Endothelial cell of umbilical vein (primary cell): ENCODE measurements at regions of chr2 and their contacts with region 1.

Region 1: GRCh38 chr2:222860740-222861410 is at the start of gene ACSL3:
- DNase-seq: peak; percentile 96
- H3K4me3 ChIP-seq: peak within 1 kb of the TSS; percentile 72 to 94 (median 92)
- H3K27ac ChIP-seq: peak within 1 kb of the TSS; percentile 89
- H3K4me1 ChIP-seq: peaks cover 38% of the 10 kb centered on the region
- H3K27me3 ChIP-seq: no peaks in the 10 kb centered on the region
- CTCF ChIP-seq: peak in 1 of 2 donors; percentile 1
- POLR2A ChIP-seq: peak; percentile 99
- total RNA-seq, gene ACSL3: 139 and 142 TPM in 2 replicates

Region 2: GRCh38 chr2:222433332-222434173 is 427.3 kb before region 1 on chr2:
- CTCF ChIA-PET with region 1: no interaction called
- POLR2A ChIA-PET with region 1: no interaction called
- dilution Hi-C with region 1: no loop called
- intact Hi-C with region 1: no loop called
- DNase-seq: no peak
- H3K4me3 ChIP-seq: no peak overlapping the region
- H3K27ac ChIP-seq: no peak overlapping the region
- H3K4me1 ChIP-seq: no peaks in the 10 kb centered on the region
- H3K27me3 ChIP-seq: no peaks in the 10 kb centered on the region
- CTCF ChIP-seq: no peak
- POLR2A ChIP-seq: no peak

Region 3: DNA sequence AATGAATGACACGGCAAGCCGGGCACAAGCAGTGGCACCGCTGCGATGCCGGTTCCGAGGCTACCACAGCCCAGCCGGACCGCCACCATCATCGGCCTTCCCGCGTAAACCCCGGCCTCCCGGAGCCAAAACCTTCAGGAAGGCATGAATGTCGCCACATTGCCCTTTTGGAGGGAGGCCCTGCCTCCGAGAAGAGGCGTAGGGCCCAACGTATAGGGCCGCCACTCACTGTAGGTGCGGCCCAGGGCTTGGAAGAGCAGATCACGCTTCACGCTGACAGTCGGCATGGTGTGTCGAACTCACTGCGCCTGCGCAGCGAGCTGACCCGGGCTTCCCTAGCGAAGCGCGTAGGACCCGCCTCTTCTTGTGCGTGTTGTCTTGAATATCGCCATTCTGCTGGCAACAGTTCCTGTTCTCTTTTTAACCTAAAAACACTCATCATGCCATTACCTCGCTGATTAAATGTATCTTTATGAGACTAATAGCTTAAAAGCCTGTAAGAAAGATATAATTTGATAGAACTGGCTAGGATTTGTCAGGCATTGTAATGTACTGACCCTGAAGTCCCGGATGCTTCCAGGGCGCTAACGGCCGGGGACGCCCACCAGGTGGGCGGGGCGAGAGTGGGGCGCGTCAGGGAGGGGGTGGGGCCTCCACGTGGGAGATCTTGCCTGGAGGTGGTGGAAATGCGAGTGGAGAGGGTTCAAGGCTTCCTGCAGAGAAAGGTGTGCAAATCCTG is 204.9 kb before region 1 on chr2 and contains the start of gene FARSB:
- CTCF ChIA-PET with region 1: no interaction called
- POLR2A ChIA-PET with region 1: no interaction called
- dilution Hi-C with region 1: no loop called
- intact Hi-C with region 1: loop called (anchors 1 kb)
- DNase-seq: peak; percentile 97
- H3K4me3 ChIP-seq: peak within 1 kb of the TSS; percentile 47 to 95 (median 92)
- H3K27ac ChIP-seq: peak within 1 kb of the TSS; percentile 99
- H3K4me1 ChIP-seq: peaks cover 34% of the 10 kb centered on the region
- H3K27me3 ChIP-seq: no peaks in the 10 kb centered on the region
- CTCF ChIP-seq: no peak
- POLR2A ChIP-seq: peak; percentile 64
- total RNA-seq, gene FARSB: 27.2 and 29.4 TPM in 2 replicates

Region 4: DNA sequence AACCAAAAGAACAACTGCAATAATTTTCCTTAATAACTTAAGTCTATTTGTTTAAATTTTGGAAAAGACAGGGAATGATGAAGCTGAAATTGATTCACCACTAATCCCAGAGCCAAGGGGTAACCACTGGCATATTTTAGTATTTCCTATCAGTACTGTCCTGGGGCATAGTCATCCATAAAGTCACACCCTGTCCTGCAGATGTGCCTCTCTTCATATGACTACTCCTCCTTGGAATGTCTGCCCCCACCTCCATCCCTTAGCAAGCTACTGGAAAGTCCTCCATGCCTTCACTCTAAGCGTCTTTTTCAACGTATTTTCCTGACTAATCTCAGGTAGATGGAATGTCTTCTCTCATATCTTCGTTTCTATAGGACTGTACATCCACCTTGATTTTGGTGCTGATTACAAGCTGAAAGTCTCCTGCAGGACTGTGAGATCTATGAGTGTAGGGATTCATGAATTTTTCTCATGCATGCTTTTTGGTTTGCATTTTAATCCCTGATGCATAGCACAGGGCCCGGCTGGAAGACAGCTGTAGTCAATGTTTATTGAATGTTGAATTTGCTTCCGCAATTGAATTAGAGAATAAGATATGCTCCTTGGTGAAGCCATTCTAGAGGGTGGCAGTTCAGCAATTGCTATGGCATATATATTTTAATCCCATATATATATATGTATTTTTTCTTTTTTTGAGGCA is 103.8 kb before region 1 on chr2:
- CTCF ChIA-PET with region 1: no interaction called
- POLR2A ChIA-PET with region 1: no interaction called
- dilution Hi-C with region 1: no loop called
- intact Hi-C with region 1: no loop called
- DNase-seq: no peak
- H3K4me3 ChIP-seq: no peak overlapping the region
- H3K27ac ChIP-seq: no peak overlapping the region
- H3K4me1 ChIP-seq: peaks cover 10% of the 10 kb centered on the region
- H3K27me3 ChIP-seq: peaks cover 0 to under 1% of the 10 kb centered on the region in 2 experiments
- CTCF ChIP-seq: no peak
- POLR2A ChIP-seq: no peak

Region 5: GRCh38 chr2:222797261-222797660 is 63.6 kb before region 1 on chr2:
- CTCF ChIA-PET with region 1: interaction called, 20 read pairs
- POLR2A ChIA-PET with region 1: interaction called, 10 read pairs
- dilution Hi-C with region 1: no loop called
- intact Hi-C with region 1: loop called (anchors 2 kb)
- DNase-seq: peak; percentile 48
- H3K4me3 ChIP-seq: no peak overlapping the region
- H3K27ac ChIP-seq: no peak overlapping the region
- H3K4me1 ChIP-seq: peaks cover 2% of the 10 kb centered on the region
- H3K27me3 ChIP-seq: peaks cover 0 to 2% of the 10 kb centered on the region in 2 experiments
- CTCF ChIP-seq: peak; percentile 30 to 43
- POLR2A ChIP-seq: no peak

Region 6: GRCh38 chr2:222844323-222844722 is 16.6 kb before region 1 on chr2:
- CTCF ChIA-PET with region 1: interaction called, 30 read pairs
- POLR2A ChIA-PET with region 1: interaction called, 6 read pairs
- dilution Hi-C with region 1: no loop called
- intact Hi-C with region 1: loop called (anchors 1 kb)
- DNase-seq: peak; percentile 55
- H3K4me3 ChIP-seq: no peak overlapping the region
- H3K27ac ChIP-seq: no peak overlapping the region
- H3K4me1 ChIP-seq: peaks cover 22% of the 10 kb centered on the region
- H3K27me3 ChIP-seq: no peaks in the 10 kb centered on the region
- CTCF ChIP-seq: no peak
- POLR2A ChIP-seq: no peak

Region 7: GRCh38 chr2:222892321-222892720 is 31.4 kb after region 1 on chr2:
- CTCF ChIA-PET with region 1: interaction called, 9 read pairs
- POLR2A ChIA-PET with region 1: interaction called, 4 read pairs
- dilution Hi-C with region 1: no loop called
- intact Hi-C with region 1: loop called (anchors 1 kb)
- DNase-seq: peak; percentile 88
- H3K4me3 ChIP-seq: peak overlapping the region in 1 of 3 experiments; percentile 50
- H3K27ac ChIP-seq: peak overlapping the region; percentile 46
- H3K4me1 ChIP-seq: peaks cover 39% of the 10 kb centered on the region
- H3K27me3 ChIP-seq: no peaks in the 10 kb centered on the region
- CTCF ChIP-seq: no peak
- POLR2A ChIP-seq: no peak

Region 8: DNA sequence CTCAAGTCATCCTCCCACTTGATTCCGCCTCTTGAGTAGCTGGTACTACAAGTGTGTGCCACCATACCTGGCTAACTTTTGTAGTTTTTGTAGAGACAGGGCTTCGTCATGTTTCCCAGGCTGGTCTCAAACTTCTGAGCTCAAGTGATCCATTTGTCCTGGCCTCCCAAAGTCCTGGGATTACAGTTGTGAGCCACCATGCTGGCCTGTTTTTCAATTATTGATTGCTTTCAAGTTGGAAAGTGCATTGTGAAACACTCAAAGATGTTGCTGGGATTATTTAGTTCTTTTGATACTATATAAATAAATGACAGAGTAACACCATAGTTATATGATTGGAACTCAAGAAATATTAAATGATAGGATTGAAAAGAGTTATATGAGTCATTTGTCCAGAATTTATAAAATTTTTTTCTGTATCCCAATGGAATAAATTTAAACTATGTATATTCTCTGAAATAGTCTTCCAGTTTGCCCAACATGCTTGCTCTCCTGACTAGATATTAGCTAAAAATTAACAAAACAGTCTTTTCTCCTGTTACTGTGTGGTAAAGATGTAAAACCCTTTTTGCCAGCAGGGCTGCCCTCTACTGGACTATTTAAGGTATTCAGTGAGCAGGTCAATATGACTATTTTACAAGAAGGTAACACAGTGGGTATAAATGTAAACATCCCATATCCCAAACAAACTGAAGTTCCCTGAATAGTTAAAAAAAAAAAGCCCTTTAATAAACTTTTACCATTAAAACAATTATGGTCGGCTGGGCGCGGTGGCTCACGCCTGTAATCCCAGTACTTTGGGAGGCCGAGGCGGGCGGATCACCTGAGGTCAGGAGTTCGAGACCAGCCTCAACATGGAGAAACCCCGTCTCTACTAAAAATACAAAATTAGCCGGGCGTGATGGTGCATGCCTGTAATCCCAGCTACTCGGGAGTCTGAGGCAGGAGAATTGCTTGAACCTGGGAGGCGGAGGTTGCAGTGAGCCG is 42.7 kb after region 1 on chr2:
- CTCF ChIA-PET with region 1: interaction called, 44 read pairs
- POLR2A ChIA-PET with region 1: no interaction called
- dilution Hi-C with region 1: no loop called
- intact Hi-C with region 1: loop called (anchors 1 kb)
- DNase-seq: peak; percentile 71
- H3K4me3 ChIP-seq: no peak overlapping the region
- H3K27ac ChIP-seq: no peak overlapping the region
- H3K4me1 ChIP-seq: peaks cover 6% of the 10 kb centered on the region
- H3K27me3 ChIP-seq: no peaks in the 10 kb centered on the region
- CTCF ChIP-seq: peak; percentile 42 to 44
- POLR2A ChIP-seq: no peak

Region 9: GRCh38 chr2:222939208-222939856 is 78.5 kb after region 1 on chr2:
- CTCF ChIA-PET with region 1: interaction called, 11 read pairs
- POLR2A ChIA-PET with region 1: no interaction called
- dilution Hi-C with region 1: no loop called
- intact Hi-C with region 1: loop called (anchors 2 kb)
- DNase-seq: peak; percentile 75
- H3K4me3 ChIP-seq: no peak overlapping the region
- H3K27ac ChIP-seq: no peak overlapping the region
- H3K4me1 ChIP-seq: no peaks in the 10 kb centered on the region
- H3K27me3 ChIP-seq: no peaks in the 10 kb centered on the region
- CTCF ChIP-seq: peak; percentile 85 to 87
- POLR2A ChIP-seq: no peak